ENCODE measurements at regions of chr6 and their contacts with region 1.

Region 1: DNA sequence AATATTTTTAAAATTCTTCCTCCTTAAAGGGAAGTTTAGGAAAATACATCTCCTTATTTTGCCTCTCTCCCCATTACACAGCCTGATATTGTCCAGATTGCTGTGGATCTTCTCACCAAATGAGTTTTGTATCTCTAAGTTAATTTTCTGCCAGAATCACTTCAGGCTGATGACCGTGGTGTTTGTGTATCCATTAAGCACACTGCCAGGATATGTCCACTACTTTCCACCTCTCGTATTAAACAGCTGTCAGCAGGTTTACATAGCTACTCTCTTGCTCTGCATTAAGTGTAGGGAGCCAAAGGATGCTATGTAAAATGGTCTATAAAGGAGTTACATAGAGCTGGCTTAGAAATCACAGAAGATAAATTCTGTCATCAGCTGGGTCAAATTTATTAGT is 201.1 kb downstream of the ZFAND3 start:
- DNase-seq: no peak
- ATAC-seq: no peak
- H3K4me3 Mint-ChIP-seq: no peak overlapping the region
- H3K27ac Mint-ChIP-seq: no peak overlapping the region
- H3K4me1 Mint-ChIP-seq: peaks cover 7% of the 10 kb centered on the region; the same call in 1 of the 2 replicates
- H3K27me3 Mint-ChIP-seq: no peaks in the 10 kb centered on the region; the same call in 1 of the 2 replicates
- CTCF ChIP-seq: no peak

Region 2: GRCh38 chr6:38034274-38034914 is 13.8 kb after region 1 on chr6:
- CTCF ChIA-PET with region 1: interaction called, 14 read pairs
- POLR2A ChIA-PET with region 1: no interaction called
- DNase-seq: no peak
- ATAC-seq: no peak
- H3K4me3 Mint-ChIP-seq: no peak overlapping the region
- H3K27ac Mint-ChIP-seq: no peak overlapping the region
- H3K4me1 Mint-ChIP-seq: peaks cover 44% of the 10 kb centered on the region
- H3K27me3 Mint-ChIP-seq: no peaks in the 10 kb centered on the region
- CTCF ChIP-seq: no peak

Measured in WTC11 (cell line).